Aorta (tissue), 5 donors: ENCODE measurements at regions of chr7 and their contacts with region 1.

Region 1: GRCh38 chr7:139777948-139778841 is at the start of gene HIPK2:
- DNase-seq: peak; percentile 84 to 95
- ATAC-seq: peak; percentile 73
- H3K4me3 ChIP-seq: peak within 1 kb of the TSS; percentile 100
- H3K27ac ChIP-seq: peak within 1 kb of the TSS; percentile 72 to 99
- H3K4me1 ChIP-seq: peaks cover 0 to 5% of the 10 kb centered on the region in 2 donors
- H3K27me3 ChIP-seq: no peaks in the 10 kb centered on the region
- total RNA-seq, gene HIPK2: 35.3 to 108 TPM

Region 2: GRCh38 chr7:139645572-139646523 is 132.3 kb before region 1 on chr7:
- intact Hi-C with region 1: loop called (anchors 2 to 5 kb)
- DNase-seq: peak; percentile 87 to 94
- ATAC-seq: peak; percentile 84
- H3K4me3 ChIP-seq: no peak overlapping the region
- H3K27ac ChIP-seq: peak overlapping the region in 1 of 2 donors; percentile 43
- H3K4me1 ChIP-seq: peaks cover 0 to 1% of the 10 kb centered on the region in 2 donors
- H3K27me3 ChIP-seq: no peaks in the 10 kb centered on the region

Region 3: DNA sequence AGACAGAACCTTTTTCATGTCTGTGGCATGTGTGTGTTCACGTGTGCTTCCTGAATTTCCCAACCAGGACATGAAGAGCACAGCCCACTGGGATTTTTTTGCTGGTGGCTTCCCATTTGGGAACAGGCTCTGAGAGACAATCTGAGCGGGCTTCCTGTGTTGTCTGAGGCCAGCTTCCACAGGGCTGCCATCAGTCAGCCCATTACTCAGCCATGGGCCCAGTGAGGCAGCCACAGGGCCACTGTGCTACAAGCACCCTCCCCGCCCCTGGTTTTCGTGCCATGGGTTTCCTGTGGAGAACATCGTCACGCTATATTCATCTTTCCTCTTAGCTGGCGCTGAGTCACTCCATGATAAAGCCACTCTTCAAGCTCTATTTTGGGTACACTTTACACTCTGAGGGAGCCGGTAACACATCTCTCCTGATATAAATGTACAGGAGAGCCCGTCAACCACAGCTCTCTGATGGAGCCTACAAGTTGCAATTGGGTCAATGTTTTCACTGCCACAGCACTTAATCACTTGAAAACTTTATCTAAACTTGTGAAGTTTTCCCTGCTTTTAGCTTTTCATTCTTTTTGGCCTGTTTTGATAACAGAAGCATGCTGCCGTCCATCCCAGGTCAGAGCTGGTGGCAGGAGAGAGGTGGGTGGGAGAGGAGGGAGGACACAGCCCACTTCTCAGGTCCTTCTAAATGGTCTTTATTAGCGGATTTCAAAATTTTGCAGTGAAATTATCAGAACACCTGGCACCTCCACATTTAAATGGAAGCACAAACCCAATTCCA is 97.3 kb before region 1 on chr7:
- intact Hi-C with region 1: loop called in 1 of 2 experiments (anchors 5 kb)
- DNase-seq: peak; percentile 87 to 94
- ATAC-seq: peak; percentile 84
- H3K4me3 ChIP-seq: no peak overlapping the region
- H3K27ac ChIP-seq: peak overlapping the region; percentile 80 to 95
- H3K4me1 ChIP-seq: peaks cover 0 to 16% of the 10 kb centered on the region in 2 donors
- H3K27me3 ChIP-seq: no peaks in the 10 kb centered on the region

Region 4: GRCh38 chr7:139702811-139703486 is 75.2 kb before region 1 on chr7:
- intact Hi-C with region 1: no loop called
- DNase-seq: no peak
- ATAC-seq: no peak
- H3K4me3 ChIP-seq: no peak overlapping the region
- H3K27ac ChIP-seq: no peak overlapping the region
- H3K4me1 ChIP-seq: no peaks in the 10 kb centered on the region
- H3K27me3 ChIP-seq: no peaks in the 10 kb centered on the region

Region 5: DNA sequence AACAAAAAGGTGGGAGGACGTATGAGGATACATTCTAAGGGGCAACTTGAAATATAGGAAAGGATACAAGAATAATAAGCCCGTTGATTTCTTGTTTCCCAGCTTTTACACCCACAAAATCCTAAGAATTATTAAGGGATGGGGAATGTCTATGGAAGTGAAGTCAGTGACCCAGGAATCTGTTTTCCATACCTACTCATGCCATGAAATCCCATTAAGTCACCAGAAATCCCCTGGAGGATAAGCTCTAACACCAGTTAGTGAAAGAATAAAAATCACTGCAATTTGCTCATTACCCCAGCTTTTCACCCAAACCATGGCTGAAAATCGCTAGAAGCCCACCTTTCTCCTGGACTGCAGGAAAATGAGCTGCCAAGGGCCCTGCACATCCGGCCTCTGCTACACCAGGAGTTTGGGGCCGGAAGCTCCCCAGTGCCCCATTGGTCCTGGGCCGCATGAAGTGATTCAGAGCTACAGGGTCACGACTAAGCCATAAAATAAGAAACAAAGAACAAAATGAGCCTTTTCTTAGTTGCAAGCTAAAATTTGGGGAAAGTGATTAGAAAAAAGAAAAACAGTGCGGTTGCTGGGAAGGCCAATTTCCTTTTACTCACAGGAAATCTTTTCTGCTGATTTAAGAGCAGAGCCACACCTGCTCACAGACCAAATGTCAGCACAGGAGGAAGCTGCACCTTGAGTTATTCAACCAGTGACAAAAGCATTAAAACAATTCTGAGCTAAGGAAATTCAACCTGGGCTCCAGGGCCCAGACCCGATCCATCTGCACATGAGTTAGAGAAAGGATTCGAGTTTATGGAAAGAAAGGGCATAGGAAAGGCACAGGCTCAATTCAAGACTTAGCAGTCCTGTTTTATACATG is 40.7 kb before region 1 on chr7:
- intact Hi-C with region 1: loop called (anchors 2 to 5 kb)
- DNase-seq: no peak
- ATAC-seq: no peak
- H3K4me3 ChIP-seq: no peak overlapping the region
- H3K27ac ChIP-seq: peak overlapping the region; percentile 61 to 73
- H3K4me1 ChIP-seq: peaks cover 9 to 14% of the 10 kb centered on the region in 2 donors
- H3K27me3 ChIP-seq: no peaks in the 10 kb centered on the region